ENCODE measurements at regions of chr19 and their contacts with region 1.

Region 1: GRCh38 chr19:1789261-1790041 is 22.6 kb downstream of the ATP8B3 start:
- DNase-seq: no peak
- H3K4me3 ChIP-seq: no peak overlapping the region
- H3K27ac ChIP-seq: no peak overlapping the region
- H3K27me3 ChIP-seq: peaks cover 15% of the 10 kb centered on the region
- CTCF ChIP-seq: no peak

Region 2: GRCh38 chr19:1665565-1666047 is 123.8 kb before region 1 on chr19:
- CTCF ChIA-PET with region 1: interaction called, 4 read pairs
- POLR2A ChIA-PET with region 1: interaction called, 12 read pairs
- DNase-seq: no peak
- H3K4me3 ChIP-seq: no peak overlapping the region
- H3K27ac ChIP-seq: no peak overlapping the region
- H3K27me3 ChIP-seq: peaks cover 31% of the 10 kb centered on the region
- CTCF ChIP-seq: no peak

Region 3: GRCh38 chr19:1680976-1681375 is 108.5 kb before region 1 on chr19:
- CTCF ChIA-PET with region 1: no interaction called
- POLR2A ChIA-PET with region 1: no interaction called
- DNase-seq: no peak
- H3K4me3 ChIP-seq: no peak overlapping the region
- H3K27ac ChIP-seq: no peak overlapping the region
- H3K27me3 ChIP-seq: peaks cover 54% of the 10 kb centered on the region
- CTCF ChIP-seq: no peak

Region 4: GRCh38 chr19:1819341-1820275 is 30.2 kb after region 1 on chr19:
- CTCF ChIA-PET with region 1: no interaction called
- POLR2A ChIA-PET with region 1: no interaction called
- DNase-seq: no peak
- H3K4me3 ChIP-seq: no peak overlapping the region
- H3K27ac ChIP-seq: no peak overlapping the region
- H3K27me3 ChIP-seq: no peaks in the 10 kb centered on the region
- CTCF ChIP-seq: no peak

Measured in AG04450 (cell line).